ENCODE measurements at regions of chr13 and their contacts with region 1.

Region 1: GRCh38 chr13:24574847-24575246 is 62.3 kb upstream of the PARP4 start:
- DNase-seq: no peak
- H3K4me3 ChIP-seq: no peak overlapping the region
- H3K4me3 Mint-ChIP-seq: no peak overlapping the region
- H3K27ac ChIP-seq: no peak overlapping the region
- H3K27ac Mint-ChIP-seq: no peak overlapping the region
- H3K4me1 ChIP-seq: no peaks in the 10 kb centered on the region
- H3K4me1 Mint-ChIP-seq: no peaks in the 10 kb centered on the region
- H3K27me3 ChIP-seq: no peaks in the 10 kb centered on the region
- H3K27me3 Mint-ChIP-seq: peaks cover 0 to 6% of the 10 kb centered on the region in 2 donors

Region 2: GRCh38 chr13:24627099-24627714 is 52.4 kb after region 1 on chr13:
- CTCF ChIA-PET with region 1: interaction called, 3 read pairs
- POLR2A ChIA-PET with region 1: no interaction called
- intact Hi-C with region 1: loop called (anchors 2 kb)
- DNase-seq: no peak
- H3K4me3 ChIP-seq: peak overlapping the region in 1 of 2 donors; percentile 25
- H3K4me3 Mint-ChIP-seq: no peak overlapping the region
- H3K27ac ChIP-seq: peak overlapping the region; percentile 40
- H3K27ac Mint-ChIP-seq: peak overlapping the region in 3 of 7 donors; percentile 36 to 46 (median 43)
- H3K4me1 ChIP-seq: peaks cover 38% of the 10 kb centered on the region
- H3K4me1 Mint-ChIP-seq: peaks cover 19 to 62% (median 38%) of the 10 kb centered on the region in 4 donors
- H3K27me3 ChIP-seq: no peaks in the 10 kb centered on the region
- H3K27me3 Mint-ChIP-seq: no peaks in the 10 kb centered on the region

Region 3: DNA sequence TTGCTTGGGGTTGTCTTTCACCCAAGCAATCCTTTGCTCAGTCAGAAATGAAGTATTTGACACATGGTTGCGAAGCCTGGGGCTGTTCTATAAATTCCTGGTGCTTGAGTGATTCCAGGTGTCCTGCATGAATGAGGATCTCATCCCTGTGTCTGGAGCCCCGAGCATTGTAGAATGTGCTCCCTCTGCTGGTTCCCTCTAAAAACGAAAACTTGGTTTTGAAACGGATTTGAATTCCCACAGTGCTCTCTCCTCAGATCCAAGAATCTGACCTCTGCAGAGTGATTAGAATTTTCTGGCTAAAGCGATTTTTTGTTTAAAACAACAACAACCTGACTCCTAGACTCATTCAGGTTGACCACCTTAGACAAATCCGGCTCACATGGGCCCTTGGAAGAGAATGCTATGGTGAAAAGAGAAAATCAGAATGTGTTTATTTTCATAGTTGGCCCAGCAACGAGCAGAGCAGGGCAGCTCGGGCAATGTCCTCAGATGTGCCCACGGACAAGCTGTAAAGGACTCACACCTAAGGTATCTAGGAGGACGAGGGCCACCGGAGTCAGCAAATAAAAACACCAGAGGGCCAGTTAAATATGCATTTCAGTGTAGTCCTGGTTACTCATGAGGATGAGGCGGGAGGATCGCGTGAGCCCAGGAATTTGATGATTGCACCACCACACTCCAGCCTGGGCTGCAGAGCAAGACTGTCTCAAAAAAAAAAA is 96.7 kb after region 1 on chr13:
- CTCF ChIA-PET with region 1: interaction called, 27 read pairs
- POLR2A ChIA-PET with region 1: no interaction called
- intact Hi-C with region 1: no loop called
- DNase-seq: peak in 2 of 5 donors; percentile 12 to 29
- H3K4me3 ChIP-seq: no peak overlapping the region
- H3K4me3 Mint-ChIP-seq: peak overlapping the region in 1 of 8 donors; percentile 10
- H3K27ac ChIP-seq: no peak overlapping the region
- H3K27ac Mint-ChIP-seq: peak overlapping the region in 1 of 7 donors; percentile 29
- H3K4me1 ChIP-seq: peaks cover 10% of the 10 kb centered on the region
- H3K4me1 Mint-ChIP-seq: peaks cover 4 to 10% (median 7%) of the 10 kb centered on the region in 4 donors
- H3K27me3 ChIP-seq: no peaks in the 10 kb centered on the region
- H3K27me3 Mint-ChIP-seq: peaks cover under 1 to 8% of the 10 kb centered on the region in 2 donors

Region 4: GRCh38 chr13:25062485-25062884 is 487.6 kb after region 1 on chr13:
- CTCF ChIA-PET with region 1: no interaction called
- POLR2A ChIA-PET with region 1: no interaction called
- intact Hi-C with region 1: no loop called
- DNase-seq: no peak
- H3K4me3 ChIP-seq: no peak overlapping the region
- H3K4me3 Mint-ChIP-seq: no peak overlapping the region
- H3K27ac ChIP-seq: no peak overlapping the region
- H3K27ac Mint-ChIP-seq: no peak overlapping the region
- H3K4me1 ChIP-seq: no peaks in the 10 kb centered on the region
- H3K4me1 Mint-ChIP-seq: no peaks in the 10 kb centered on the region
- H3K27me3 ChIP-seq: peaks cover 4% of the 10 kb centered on the region
- H3K27me3 Mint-ChIP-seq: peaks cover 11 to 19% of the 10 kb centered on the region in 2 donors